T-cell (primary cell): ENCODE measurements at regions of chr6 and their contacts with region 1.

Region 1: GRCh38 chr6:30678964-30679726 is 6.3 kb upstream of the DHX16 start:
- DNase-seq: peak; percentile 77 to 95 (median 90)
- ATAC-seq: peak; percentile 27 to 53 (median 32)
- H3K4me3 ChIP-seq: peak overlapping the region; percentile 92 to 100
- H3K4me3 Mint-ChIP-seq: peak overlapping the region; percentile 92 to 97 (median 96)
- H3K27ac ChIP-seq: peak overlapping the region; percentile 81
- H3K27ac Mint-ChIP-seq: peak overlapping the region; percentile 94 to 96
- H3K4me1 ChIP-seq: peaks cover 15 to 45% of the 10 kb centered on the region in 2 experiments
- H3K4me1 Mint-ChIP-seq: peaks cover 42 to 55% (median 43%) of the 10 kb centered on the region in 3 donors
- H3K27me3 ChIP-seq: no peaks in the 10 kb centered on the region
- H3K27me3 Mint-ChIP-seq: no peaks in the 10 kb centered on the region

Region 2: DNA sequence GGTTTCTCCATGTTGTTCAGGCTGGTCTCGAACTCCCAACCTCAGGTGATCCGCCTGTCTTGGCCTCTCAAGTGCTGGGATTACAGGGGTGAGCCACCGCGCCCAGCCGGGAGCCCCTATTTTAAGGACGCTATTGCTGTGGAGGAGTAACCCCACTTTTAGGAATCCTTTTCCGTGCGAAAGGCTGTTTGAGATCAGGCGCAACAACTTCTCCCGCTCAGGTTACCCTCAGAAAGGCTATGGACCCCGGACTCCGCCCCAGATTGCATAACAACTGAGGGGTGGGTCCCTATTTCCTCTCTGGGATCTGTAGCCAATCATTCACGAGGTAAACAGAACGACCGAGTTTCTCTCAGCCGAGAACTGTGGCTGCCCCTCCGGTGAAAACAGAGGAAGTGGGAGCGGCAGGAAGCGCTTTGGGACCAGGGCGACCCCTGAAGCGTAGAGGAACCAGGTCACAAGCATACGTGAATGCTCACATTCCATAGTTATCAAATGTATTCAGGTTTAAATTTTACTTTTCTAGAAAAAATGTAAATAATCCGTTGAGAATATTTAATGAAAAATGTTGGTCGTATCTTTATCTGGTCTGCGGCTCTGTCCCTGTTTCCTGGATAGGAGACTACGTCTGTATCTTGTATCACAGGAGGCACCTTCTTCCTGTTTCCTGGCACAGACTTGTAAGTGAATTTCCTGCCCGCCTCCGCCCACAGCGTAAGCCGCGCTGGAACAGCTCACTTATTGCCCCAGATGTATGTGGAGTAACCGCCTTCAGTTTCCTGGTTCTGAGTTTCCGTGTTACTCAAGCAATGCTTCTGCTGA is 163.0 kb before region 1 on chr6:
- CTCF ChIA-PET with region 1: no interaction called
- POLR2A ChIA-PET with region 1: interaction called, 4 to 11 read pairs
- DNase-seq: peak; percentile 73 to 97 (median 90)
- ATAC-seq: peak; percentile 86 to 89 (median 88)
- H3K4me3 ChIP-seq: peak overlapping the region; percentile 45 to 62
- H3K4me3 Mint-ChIP-seq: peak overlapping the region; percentile 84 to 89 (median 85)
- H3K27ac ChIP-seq: peak overlapping the region; percentile 93
- H3K27ac Mint-ChIP-seq: peak overlapping the region; percentile 98 to 99
- H3K4me1 ChIP-seq: peaks cover 37 to 84% of the 10 kb centered on the region in 2 experiments
- H3K4me1 Mint-ChIP-seq: peaks cover 63 to 73% (median 68%) of the 10 kb centered on the region in 3 donors
- H3K27me3 ChIP-seq: no peaks in the 10 kb centered on the region
- H3K27me3 Mint-ChIP-seq: no peaks in the 10 kb centered on the region

Region 3: GRCh38 chr6:30717042-30717844 is 38.1 kb after region 1 on chr6 and contains the start of gene MDC1:
- CTCF ChIA-PET with region 1: interaction called, 22 to 254 read pairs
- POLR2A ChIA-PET with region 1: interaction called, 5 to 11 read pairs
- DNase-seq: peak; percentile 92 to 100 (median 99)
- ATAC-seq: peak; percentile 75 to 78 (median 77)
- H3K4me3 ChIP-seq: peak within 1 kb of the TSS; percentile 69 to 71
- H3K4me3 Mint-ChIP-seq: peak within 1 kb of the TSS; percentile 95 to 98 (median 97)
- H3K27ac ChIP-seq: peak within 1 kb of the TSS; percentile 93
- H3K27ac Mint-ChIP-seq: peak within 1 kb of the TSS; percentile 99
- H3K4me1 ChIP-seq: peaks cover 17 to 38% of the 10 kb centered on the region in 2 experiments
- H3K4me1 Mint-ChIP-seq: peaks cover 51 to 63% (median 53%) of the 10 kb centered on the region in 3 donors
- H3K27me3 ChIP-seq: no peaks in the 10 kb centered on the region
- H3K27me3 Mint-ChIP-seq: no peaks in the 10 kb centered on the region
- total RNA-seq, gene MDC1: 42.3 to 69.7 (median 53.4) TPM

Region 4: GRCh38 chr6:30730601-30731435 is 51.7 kb after region 1 on chr6:
- CTCF ChIA-PET with region 1: interaction called, 3 to 24 read pairs
- POLR2A ChIA-PET with region 1: no interaction called
- DNase-seq: peak; percentile 67 to 89 (median 79)
- ATAC-seq: peak; percentile 95 to 97 (median 97)
- H3K4me3 ChIP-seq: peak overlapping the region in 1 of 2 donors; percentile 6
- H3K4me3 Mint-ChIP-seq: peak overlapping the region in 1 of 3 donors; percentile 56
- H3K27ac ChIP-seq: peak overlapping the region; percentile 28
- H3K27ac Mint-ChIP-seq: peak overlapping the region; percentile 71 to 79
- H3K4me1 ChIP-seq: peaks cover 8 to 35% of the 10 kb centered on the region in 2 experiments
- H3K4me1 Mint-ChIP-seq: peaks cover 31 to 46% (median 33%) of the 10 kb centered on the region in 3 donors
- H3K27me3 ChIP-seq: no peaks in the 10 kb centered on the region
- H3K27me3 Mint-ChIP-seq: no peaks in the 10 kb centered on the region

Region 5: GRCh38 chr6:30821862-30822782 is 143.0 kb after region 1 on chr6:
- CTCF ChIA-PET with region 1: no interaction called
- POLR2A ChIA-PET with region 1: no interaction called
- DNase-seq: peak in 2 of 35 experiments; percentile 6 to 67
- ATAC-seq: peak in 1 of 4 experiments; percentile 38
- H3K4me3 ChIP-seq: no peak overlapping the region
- H3K4me3 Mint-ChIP-seq: no peak overlapping the region
- H3K27ac ChIP-seq: peak overlapping the region; percentile 5
- H3K27ac Mint-ChIP-seq: peak overlapping the region; percentile 79 to 83
- H3K4me1 ChIP-seq: peaks cover 4 to 13% of the 10 kb centered on the region in 2 experiments
- H3K4me1 Mint-ChIP-seq: peaks cover 50 to 80% (median 65%) of the 10 kb centered on the region in 3 donors
- H3K27me3 ChIP-seq: no peaks in the 10 kb centered on the region
- H3K27me3 Mint-ChIP-seq: no peaks in the 10 kb centered on the region